GM18951 (cell line): ENCODE measurements at regions of chr16 and their contacts with region 1.

Region 1: DNA sequence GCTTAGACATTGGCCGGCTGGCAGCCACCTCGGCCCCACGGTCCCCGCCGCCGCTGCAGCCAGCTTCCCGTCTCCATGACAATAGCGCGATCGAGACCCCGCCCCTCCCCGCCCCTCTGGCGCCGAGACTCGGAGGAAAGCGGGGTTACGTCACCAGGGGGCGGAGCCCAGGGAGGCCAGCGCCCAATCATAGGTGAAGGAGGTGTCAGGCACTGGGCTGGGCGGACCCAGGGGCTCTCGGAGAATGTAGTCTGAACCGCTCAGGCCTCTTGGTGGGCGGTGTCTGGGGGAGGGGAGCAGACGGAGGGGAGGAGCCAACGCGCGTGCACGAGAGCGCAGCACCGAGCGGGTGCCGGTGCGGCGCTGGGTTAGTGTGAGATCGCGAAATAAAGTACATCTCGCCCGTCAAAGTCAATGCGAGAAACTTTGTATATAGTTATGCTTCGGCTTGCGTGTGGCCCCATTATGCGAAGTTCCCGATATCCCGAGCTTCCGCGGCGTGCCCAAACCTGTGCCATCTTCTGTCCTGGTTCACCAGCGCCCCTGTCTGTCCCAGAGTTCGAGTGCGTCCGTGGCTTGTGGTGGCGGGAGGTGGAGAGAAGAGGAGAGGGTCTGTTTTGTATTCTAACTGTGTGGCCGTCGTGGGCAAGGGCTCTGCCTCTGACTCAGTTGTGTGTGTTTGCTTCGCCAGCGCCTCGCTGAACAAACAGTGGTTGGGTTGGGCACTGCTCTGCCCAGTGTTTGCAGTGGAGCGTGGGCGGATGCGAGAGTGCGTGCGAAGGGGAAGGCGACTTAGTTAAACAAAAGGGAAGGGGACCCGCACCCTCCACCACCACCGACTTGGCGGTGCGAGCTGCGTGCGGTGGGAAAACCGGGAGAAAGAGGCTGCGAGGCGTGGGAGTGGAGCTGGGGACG is 1.3 kb upstream of the IRX5 start:
- POLR2A ChIP-seq: peak; percentile 9

Region 2: DNA sequence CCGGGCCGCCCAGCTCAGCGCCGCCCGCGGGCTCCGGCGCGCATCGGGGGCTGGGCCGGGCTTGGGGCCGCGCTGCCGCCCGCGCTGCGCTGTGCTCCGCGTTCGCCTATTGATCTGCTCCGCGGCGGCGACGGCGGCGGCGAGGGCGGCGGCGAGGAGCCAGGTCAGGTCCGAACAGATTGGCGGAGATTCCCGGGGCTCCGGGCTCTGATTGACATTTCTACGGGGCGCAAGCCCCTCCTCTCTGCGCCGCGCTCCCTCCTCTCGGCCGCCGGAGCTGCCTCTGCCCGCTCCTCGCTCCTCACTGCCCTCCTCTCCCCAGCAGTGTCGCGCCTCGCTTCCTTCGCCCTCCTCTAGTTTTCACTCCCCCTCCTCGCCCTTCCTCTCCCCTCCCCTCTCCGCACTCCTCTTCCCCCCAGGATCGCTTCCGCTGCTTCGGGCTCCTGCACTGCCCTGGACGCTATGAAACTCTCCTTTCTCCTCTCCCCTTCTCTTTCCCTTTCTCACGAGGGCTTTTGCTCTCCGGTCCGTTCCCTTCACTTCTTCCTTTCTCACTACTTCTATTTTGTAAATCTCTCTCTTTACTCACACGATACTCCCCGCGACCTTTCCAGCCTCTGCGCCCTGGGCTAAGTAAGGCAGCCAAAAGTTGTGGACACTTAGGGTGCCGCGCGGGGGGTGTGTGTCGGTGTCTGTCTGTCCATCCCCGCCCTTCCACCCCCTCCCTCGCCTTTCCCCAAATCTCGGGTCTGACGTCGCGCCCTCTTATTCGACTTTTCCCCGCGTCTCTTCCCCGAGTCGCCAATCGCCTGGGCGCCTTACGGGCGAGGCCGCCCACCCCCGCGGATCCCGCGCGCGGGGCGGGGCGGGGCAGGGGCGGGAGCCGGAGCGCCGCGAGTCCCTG is 643.0 kb before region 1 on chr16 and contains the start of gene IRX3:
- in situ Hi-C with region 1: loop called (anchors 10 kb)
- POLR2A ChIP-seq: no peak